Activated CD4-positive, alpha-beta T cell treated with anti-CD3 and anti-CD28 coated beads for 36 hours (primary cell): ENCODE measurements at regions of chr3 and their contacts with region 1.

Region 1: DNA sequence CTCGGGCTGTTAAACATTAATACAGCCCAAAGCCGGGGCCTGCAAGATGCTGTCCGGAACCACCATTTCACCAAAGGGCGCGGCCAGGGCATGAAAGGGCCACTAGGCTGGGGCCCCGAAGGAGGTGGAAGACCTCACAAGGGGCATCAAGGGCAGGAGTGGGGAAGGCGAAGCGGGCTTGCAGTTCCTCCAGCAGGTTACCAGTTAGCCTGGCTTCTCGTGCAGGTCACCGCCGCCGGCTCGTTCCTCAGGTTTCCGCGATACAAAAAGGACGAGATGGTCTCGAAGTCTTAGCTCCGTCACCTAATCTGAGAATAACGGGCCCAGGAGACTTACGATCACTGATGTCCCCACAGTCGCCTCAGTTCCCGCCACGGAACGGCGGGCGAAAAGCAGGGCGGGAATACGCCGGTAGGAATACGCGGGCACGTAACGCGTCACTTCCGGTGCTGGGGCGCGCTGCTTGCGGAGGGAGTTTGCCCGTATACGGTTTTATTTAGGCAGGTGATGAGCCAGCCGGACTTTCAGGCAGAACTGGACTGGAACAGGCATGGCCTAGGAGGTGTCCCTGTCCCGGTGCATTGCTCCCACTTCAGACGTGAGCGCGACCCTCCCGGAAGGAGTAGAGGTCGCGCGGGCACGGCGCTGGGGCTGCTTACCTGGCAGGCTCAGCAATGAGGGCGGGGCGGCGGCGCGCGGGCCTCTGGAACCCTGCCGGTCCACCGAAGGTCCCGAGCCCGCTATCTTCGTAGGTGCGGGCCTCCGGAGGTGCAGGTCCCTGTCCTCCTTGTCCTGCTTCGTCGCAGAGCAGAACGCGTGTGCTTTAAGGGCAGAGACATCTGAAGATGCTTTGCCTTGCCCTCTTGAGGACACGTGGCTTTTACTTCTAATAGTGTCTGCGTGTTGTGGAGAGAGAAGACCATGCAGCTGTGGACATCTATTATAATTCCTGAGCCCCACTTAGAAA is at the start of gene RFC4:
- DNase-seq: peak; percentile 93
- ATAC-seq: peak; percentile 89
- H3K4me3 Mint-ChIP-seq: peak within 1 kb of the TSS; percentile 90
- H3K27ac Mint-ChIP-seq: peak within 1 kb of the TSS; percentile 92
- H3K4me1 Mint-ChIP-seq: peaks cover 26% of the 10 kb centered on the region
- H3K27me3 Mint-ChIP-seq: no peaks in the 10 kb centered on the region
- total RNA-seq, gene RFC4: 128 to 130 TPM

Region 2: DNA sequence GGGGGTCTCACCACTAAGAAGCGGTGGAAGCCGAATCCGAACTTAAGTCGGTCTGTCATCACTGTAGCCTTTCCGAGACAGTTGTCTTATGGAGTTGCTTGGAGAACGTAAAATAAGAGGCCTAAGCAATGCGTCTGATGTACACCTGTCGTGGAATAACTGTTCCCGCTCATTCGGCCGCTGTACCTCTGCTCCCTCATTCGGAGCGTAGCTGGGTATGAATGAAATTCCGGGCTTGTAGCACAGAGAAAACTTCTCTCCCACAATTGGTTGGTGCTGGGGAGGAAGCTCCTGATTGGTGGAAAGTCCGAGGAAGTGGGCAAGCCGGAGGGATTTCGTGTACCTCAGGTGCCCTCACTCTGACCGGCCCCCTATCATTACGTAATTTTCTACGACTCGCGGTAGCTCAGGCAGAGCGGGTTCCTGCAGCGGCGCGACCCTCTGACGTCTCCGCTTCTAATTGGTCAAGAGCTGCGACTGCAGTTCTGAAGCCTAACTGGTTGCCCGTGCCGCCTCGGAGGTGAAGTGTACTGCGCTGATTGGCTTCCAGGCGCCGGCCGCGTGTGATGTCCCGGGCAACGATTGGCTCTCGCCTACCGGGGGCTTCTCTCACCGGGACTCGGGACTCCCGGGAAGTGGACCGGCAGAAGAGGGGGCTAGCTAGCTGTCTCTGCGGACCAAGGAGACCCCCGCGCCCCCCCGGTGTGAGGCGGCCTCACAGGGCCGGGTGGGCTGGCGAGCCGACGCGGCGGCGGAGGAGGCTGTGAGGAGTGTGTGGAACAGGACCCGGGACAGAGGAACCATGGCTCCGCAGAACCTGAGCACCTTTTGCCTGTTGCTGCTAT is 236.1 kb before region 1 on chr3 and contains the start of gene DNAJB11:
- CTCF ChIA-PET with region 1: no interaction called
- POLR2A ChIA-PET with region 1: no interaction called
- intact Hi-C with region 1: loop called (anchors 1 to 2 kb)
- DNase-seq: peak; percentile 100
- ATAC-seq: peak; percentile 92
- H3K4me3 Mint-ChIP-seq: peak within 1 kb of the TSS; percentile 93
- H3K27ac Mint-ChIP-seq: peak within 1 kb of the TSS; percentile 95
- H3K4me1 Mint-ChIP-seq: peaks cover 50% of the 10 kb centered on the region
- H3K27me3 Mint-ChIP-seq: no peaks in the 10 kb centered on the region
- total RNA-seq, gene DNAJB11: 30.9 to 36.6 TPM

Region 3: GRCh38 chr3:186783073-186783730 is 23.2 kb before region 1 on chr3 and contains the start of gene EIF4A2:
- CTCF ChIA-PET with region 1: interaction called, 6 read pairs
- POLR2A ChIA-PET with region 1: interaction called, 9 read pairs
- intact Hi-C with region 1: loop called (anchors 1 kb)
- DNase-seq: peak; percentile 95
- ATAC-seq: peak; percentile 69
- H3K4me3 Mint-ChIP-seq: peak within 1 kb of the TSS; percentile 100
- H3K27ac Mint-ChIP-seq: peak within 1 kb of the TSS; percentile 100
- H3K4me1 Mint-ChIP-seq: peaks cover 32% of the 10 kb centered on the region
- H3K27me3 Mint-ChIP-seq: no peaks in the 10 kb centered on the region
- total RNA-seq, gene EIF4A2: 291 to 390 TPM

Region 4: GRCh38 chr3:186790261-186790981 is 16.0 kb before region 1 on chr3:
- CTCF ChIA-PET with region 1: no interaction called
- POLR2A ChIA-PET with region 1: interaction called, 12 read pairs
- intact Hi-C with region 1: loop called in 1 of 2 experiments (anchors 2 kb)
- DNase-seq: no peak
- ATAC-seq: peak; percentile 21
- H3K4me3 Mint-ChIP-seq: peak overlapping the region; percentile 19
- H3K27ac Mint-ChIP-seq: peak overlapping the region; percentile 77
- H3K4me1 Mint-ChIP-seq: peaks cover 42% of the 10 kb centered on the region
- H3K27me3 Mint-ChIP-seq: no peaks in the 10 kb centered on the region

Region 5: GRCh38 chr3:186821429-186822367 is 15.3 kb after region 1 on chr3:
- CTCF ChIA-PET with region 1: interaction called, 15 read pairs
- POLR2A ChIA-PET with region 1: interaction called, 3 read pairs
- intact Hi-C with region 1: loop called in 1 of 2 experiments (anchors 2 kb)
- DNase-seq: no peak
- ATAC-seq: no peak
- H3K4me3 Mint-ChIP-seq: no peak overlapping the region
- H3K27ac Mint-ChIP-seq: no peak overlapping the region
- H3K4me1 Mint-ChIP-seq: peaks cover 20% of the 10 kb centered on the region
- H3K27me3 Mint-ChIP-seq: peaks cover 5% of the 10 kb centered on the region

Region 6: DNA sequence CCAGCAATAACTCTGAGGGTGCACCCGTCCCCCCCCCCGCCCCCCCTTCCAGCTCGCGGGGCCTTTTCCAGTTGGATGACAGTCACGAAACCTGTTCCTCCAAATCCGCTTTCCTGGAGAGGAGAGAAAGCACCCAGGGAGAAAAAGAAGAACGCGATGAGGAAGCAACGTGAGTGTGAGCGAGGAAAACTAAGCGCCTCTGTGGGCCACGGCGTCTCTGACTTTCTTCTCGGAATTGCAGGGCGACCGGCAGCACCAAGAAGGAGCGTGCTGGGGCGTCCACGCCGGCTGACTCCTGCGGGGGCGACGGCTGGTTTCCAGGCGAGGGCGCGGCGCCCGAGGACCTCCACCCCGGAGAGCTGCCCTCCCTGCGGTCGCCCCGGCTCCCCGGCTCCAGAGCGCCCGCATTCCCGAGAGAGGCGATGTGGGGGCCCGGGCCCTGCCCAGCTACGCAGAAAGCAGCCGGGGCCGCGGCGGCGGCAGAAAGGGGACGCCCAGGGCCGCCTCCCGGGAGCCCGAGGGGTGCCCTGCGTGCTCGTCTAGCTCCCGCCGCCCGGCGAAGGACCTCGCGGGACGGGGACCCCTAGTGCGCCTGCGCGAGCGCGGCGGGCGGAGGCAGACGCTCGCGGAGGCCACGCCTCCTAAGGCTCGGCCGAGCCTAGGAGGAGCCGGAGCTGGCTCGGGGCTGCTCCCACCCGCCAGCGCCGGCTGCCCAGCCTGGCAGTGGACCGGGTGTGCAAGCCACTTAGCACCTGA is 20.8 kb after region 1 on chr3:
- CTCF ChIA-PET with region 1: interaction called, 15 read pairs
- POLR2A ChIA-PET with region 1: interaction called, 3 read pairs
- intact Hi-C with region 1: loop called (anchors 1 to 2 kb)
- DNase-seq: peak; percentile 91
- ATAC-seq: peak; percentile 83
- H3K4me3 Mint-ChIP-seq: peak overlapping the region; percentile 82
- H3K27ac Mint-ChIP-seq: no peak overlapping the region
- H3K4me1 Mint-ChIP-seq: peaks cover 23% of the 10 kb centered on the region
- H3K27me3 Mint-ChIP-seq: peaks cover 31% of the 10 kb centered on the region

Region 7: DNA sequence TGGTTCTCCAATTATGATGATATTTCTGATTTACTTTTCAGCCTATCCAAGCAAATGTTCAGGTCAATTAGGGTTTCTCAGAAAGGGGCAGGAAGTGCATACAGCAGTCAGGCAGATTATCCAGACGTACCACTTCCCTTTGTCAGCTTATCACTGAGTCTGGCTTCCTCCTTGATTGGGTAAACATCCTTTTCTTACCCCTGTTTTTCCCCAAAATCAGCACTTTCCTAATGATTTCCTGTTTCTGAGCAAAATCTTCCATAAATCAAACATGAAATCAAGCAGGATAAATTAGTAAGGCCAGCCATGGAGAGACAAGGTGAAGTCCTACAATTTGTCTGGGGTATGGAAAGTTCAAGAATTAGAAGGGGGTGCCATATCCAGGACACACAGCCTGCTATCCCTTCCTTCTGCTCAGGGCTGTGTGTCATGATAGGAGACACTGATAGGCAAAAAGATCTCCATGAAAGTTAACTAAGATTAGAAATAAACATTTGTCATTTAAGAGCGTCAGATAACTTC is 65.1 kb after region 1 on chr3:
- CTCF ChIA-PET with region 1: no interaction called
- POLR2A ChIA-PET with region 1: no interaction called
- intact Hi-C with region 1: no loop called
- DNase-seq: no peak
- ATAC-seq: peak; percentile 66
- H3K4me3 Mint-ChIP-seq: no peak overlapping the region
- H3K27ac Mint-ChIP-seq: peak overlapping the region; percentile 64
- H3K4me1 Mint-ChIP-seq: peaks cover 28% of the 10 kb centered on the region
- H3K27me3 Mint-ChIP-seq: no peaks in the 10 kb centered on the region